ENCODE measurements at regions of chr4 and their contacts with region 1.

Region 1: GRCh38 chr4:163554870-163555465 is 60.5 kb downstream of the TMA16 start:
- DNase-seq: peak; percentile 32
- ATAC-seq: peak; percentile 42; the same call in 1 of the 2 replicates
- H3K4me3 ChIP-seq: no peak overlapping the region
- H3K27ac ChIP-seq: no peak overlapping the region
- H3K4me1 ChIP-seq: no peaks in the 10 kb centered on the region
- H3K27me3 ChIP-seq: peaks cover 2% of the 10 kb centered on the region; the same call in 1 of the 2 replicates
- CTCF ChIP-seq: peak; percentile 74
- POLR2A ChIP-seq: no peak
- RAD21 ChIP-seq: peak; percentile 77

Region 2: DNA sequence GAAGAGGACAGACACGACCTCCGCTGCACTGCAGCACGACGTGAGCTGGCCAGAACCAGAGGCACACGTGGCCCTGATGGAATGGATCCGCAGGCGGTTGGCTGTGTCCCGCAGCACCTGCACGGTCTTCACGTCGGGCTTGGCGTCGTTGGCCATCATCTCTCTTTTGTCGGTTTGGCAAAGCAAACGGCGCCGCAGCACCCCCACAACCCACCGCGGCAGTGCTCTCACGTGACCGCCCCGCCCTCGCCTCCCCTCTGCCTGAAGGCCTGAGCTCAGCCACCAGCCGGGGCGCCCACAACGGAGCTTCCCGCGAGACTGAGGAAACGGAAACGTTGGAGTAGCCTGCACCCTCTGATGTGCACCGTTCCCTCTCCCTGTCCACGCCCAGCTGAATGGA is 81.4 kb before region 1 on chr4 and contains the start of gene TKTL2:
- CTCF ChIA-PET with region 1: interaction called, 3 read pairs
- POLR2A ChIA-PET with region 1: interaction called, 16 read pairs
- dilution Hi-C with region 1: no loop called
- in situ Hi-C with region 1: no loop called
- intact Hi-C with region 1: no loop called
- DNase-seq: no peak
- ATAC-seq: no peak
- H3K4me3 ChIP-seq: no peak within 1 kb of the TSS
- H3K27ac ChIP-seq: no peak within 1 kb of the TSS
- H3K4me1 ChIP-seq: no peaks in the 10 kb centered on the region
- H3K27me3 ChIP-seq: no peaks in the 10 kb centered on the region
- CTCF ChIP-seq: no peak
- POLR2A ChIP-seq: no peak
- RAD21 ChIP-seq: no peak
- total RNA-seq, gene TKTL2: not detected in 2 replicates

Region 3: DNA sequence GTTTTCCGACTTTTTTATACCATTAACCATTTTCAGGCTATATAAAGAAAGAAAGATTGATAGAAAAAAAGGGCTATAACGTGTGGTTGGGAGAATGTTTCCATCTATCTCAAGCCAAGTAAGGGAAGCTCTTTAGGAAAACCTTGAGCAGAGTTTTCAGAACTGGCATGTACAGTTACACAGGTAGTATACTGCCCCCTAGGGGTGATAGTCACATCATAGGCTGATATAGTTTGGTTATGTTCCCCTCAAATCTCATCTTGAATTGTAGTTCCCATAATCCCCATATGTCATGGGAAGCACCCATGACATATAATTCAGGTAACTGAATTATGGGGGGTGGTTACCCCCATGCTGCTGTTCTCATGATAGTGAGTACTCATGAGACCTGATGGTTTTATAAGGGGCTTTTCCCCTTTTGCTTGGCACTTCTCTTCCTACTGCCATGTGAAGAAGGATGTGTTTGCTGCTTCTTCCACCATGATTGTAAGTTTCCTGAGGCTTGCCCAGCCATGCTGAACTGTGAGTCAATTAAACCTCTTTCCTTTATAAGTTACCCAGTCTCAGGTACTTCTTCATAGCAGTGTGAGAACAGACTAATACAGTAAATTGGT is 126.3 kb after region 1 on chr4:
- CTCF ChIA-PET with region 1: interaction called, 3 read pairs
- POLR2A ChIA-PET with region 1: no interaction called
- dilution Hi-C with region 1: no loop called
- in situ Hi-C with region 1: no loop called
- intact Hi-C with region 1: loop called (anchors 2 kb)
- DNase-seq: peak; percentile 28
- ATAC-seq: no peak; the same call in 1 of the 2 replicates
- H3K4me3 ChIP-seq: no peak overlapping the region
- H3K27ac ChIP-seq: no peak overlapping the region
- H3K4me1 ChIP-seq: no peaks in the 10 kb centered on the region
- H3K27me3 ChIP-seq: no peaks in the 10 kb centered on the region
- CTCF ChIP-seq: peak; percentile 44
- POLR2A ChIP-seq: no peak
- RAD21 ChIP-seq: peak; percentile 21; the same call in 1 of the 2 replicates

Region 4: DNA sequence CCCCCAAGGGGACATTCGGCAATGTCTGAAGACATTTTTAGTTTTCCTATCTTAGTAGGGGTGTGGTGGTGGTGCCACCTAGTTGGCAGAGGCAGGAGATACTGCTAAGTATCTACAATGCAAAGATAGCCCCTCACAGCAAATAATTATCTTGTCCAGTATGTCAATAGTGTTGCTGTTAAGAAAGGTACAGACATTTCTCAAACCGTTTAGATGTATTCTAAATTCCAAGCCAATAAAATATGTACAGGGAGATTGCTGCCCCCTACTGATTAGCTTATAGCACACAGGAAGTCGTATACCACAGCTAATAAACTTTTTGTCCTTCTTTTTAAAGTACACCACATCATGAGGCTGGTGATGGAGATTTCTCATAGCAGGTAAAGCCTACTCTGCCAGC is 200.0 kb after region 1 on chr4:
- CTCF ChIA-PET with region 1: interaction called, 7 read pairs
- POLR2A ChIA-PET with region 1: no interaction called
- dilution Hi-C with region 1: no loop called
- in situ Hi-C with region 1: loop called (anchors 5 kb)
- intact Hi-C with region 1: loop called (anchors 1 kb)
- DNase-seq: peak; percentile 43
- ATAC-seq: peak; percentile 51; the same call in 1 of the 2 replicates
- H3K4me3 ChIP-seq: no peak overlapping the region
- H3K27ac ChIP-seq: no peak overlapping the region
- H3K4me1 ChIP-seq: no peaks in the 10 kb centered on the region
- H3K27me3 ChIP-seq: no peaks in the 10 kb centered on the region
- CTCF ChIP-seq: peak; percentile 68
- POLR2A ChIP-seq: no peak
- RAD21 ChIP-seq: peak; percentile 62; the same call in 1 of the 2 replicates

Region 5: GRCh38 chr4:164731827-164732474 is 1177.0 kb after region 1 on chr4:
- CTCF ChIA-PET with region 1: interaction called, 26 read pairs
- POLR2A ChIA-PET with region 1: no interaction called
- dilution Hi-C with region 1: no loop called
- in situ Hi-C with region 1: loop called (anchors 10 kb)
- intact Hi-C with region 1: loop called (anchors 1 kb)
- DNase-seq: peak; percentile 28
- ATAC-seq: peak; percentile 68; the same call in 1 of the 2 replicates
- H3K4me3 ChIP-seq: no peak overlapping the region
- H3K27ac ChIP-seq: no peak overlapping the region
- H3K4me1 ChIP-seq: no peaks in the 10 kb centered on the region
- H3K27me3 ChIP-seq: no peaks in the 10 kb centered on the region
- CTCF ChIP-seq: peak; percentile 73
- POLR2A ChIP-seq: no peak
- RAD21 ChIP-seq: peak; percentile 72

Region 6: DNA sequence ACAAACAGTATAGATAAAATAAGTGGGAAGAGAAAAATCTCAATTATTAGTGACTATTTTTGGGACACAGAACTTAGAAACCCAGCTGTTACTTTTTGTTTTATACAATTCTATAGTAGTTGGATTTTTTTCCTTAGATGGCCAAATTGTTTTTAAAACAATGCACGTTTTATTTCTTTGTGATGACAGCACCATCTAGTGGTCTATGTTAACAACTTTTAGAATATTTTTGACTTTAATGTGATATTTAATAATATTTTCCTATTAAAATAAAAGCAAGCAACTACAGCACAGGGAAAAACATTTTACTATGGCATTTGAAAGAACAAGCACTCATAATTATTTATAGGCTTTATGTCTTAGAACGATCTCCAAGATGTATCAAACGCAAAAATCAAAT is 1193.4 kb after region 1 on chr4:
- CTCF ChIA-PET with region 1: no interaction called
- POLR2A ChIA-PET with region 1: no interaction called
- dilution Hi-C with region 1: no loop called
- in situ Hi-C with region 1: no loop called
- intact Hi-C with region 1: loop called (anchors 2 kb)
- DNase-seq: peak; percentile 19
- ATAC-seq: no peak
- H3K4me3 ChIP-seq: no peak overlapping the region
- H3K27ac ChIP-seq: no peak overlapping the region
- H3K4me1 ChIP-seq: no peaks in the 10 kb centered on the region
- H3K27me3 ChIP-seq: no peaks in the 10 kb centered on the region
- CTCF ChIP-seq: peak; percentile 45
- POLR2A ChIP-seq: no peak
- RAD21 ChIP-seq: peak; percentile 26; the same call in 1 of the 2 replicates

Region 7: DNA sequence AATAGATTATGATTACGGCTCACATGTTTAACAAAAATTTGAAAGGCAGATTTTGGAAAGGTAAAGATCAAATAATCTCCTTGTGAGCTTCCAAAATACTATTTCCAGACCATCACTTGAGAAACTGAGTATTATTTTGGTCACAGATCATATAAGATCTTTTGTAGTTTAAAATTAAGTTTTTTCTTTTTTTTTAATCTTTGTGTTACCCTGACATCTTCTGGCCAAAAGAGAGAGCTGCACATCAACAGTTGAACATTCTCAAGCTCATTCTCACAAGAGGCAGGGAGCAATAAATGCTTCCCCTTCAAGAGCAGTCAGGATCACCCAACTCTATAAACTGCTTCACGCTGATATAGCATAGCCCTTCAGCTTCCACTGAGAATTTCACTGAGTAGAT is 1541.8 kb after region 1 on chr4:
- CTCF ChIA-PET with region 1: no interaction called
- POLR2A ChIA-PET with region 1: no interaction called
- dilution Hi-C with region 1: no loop called
- in situ Hi-C with region 1: no loop called
- intact Hi-C with region 1: loop called (anchors 5 kb)
- DNase-seq: peak; percentile 44
- ATAC-seq: peak; percentile 69
- H3K4me3 ChIP-seq: no peak overlapping the region
- H3K27ac ChIP-seq: no peak overlapping the region
- H3K4me1 ChIP-seq: no peaks in the 10 kb centered on the region
- H3K27me3 ChIP-seq: no peaks in the 10 kb centered on the region
- CTCF ChIP-seq: peak; percentile 60
- POLR2A ChIP-seq: no peak
- RAD21 ChIP-seq: peak; percentile 52

Measured in IMR-90 (cell line).